ENCODE measurements at regions of chr10 and their contacts with region 1.

Region 1: DNA sequence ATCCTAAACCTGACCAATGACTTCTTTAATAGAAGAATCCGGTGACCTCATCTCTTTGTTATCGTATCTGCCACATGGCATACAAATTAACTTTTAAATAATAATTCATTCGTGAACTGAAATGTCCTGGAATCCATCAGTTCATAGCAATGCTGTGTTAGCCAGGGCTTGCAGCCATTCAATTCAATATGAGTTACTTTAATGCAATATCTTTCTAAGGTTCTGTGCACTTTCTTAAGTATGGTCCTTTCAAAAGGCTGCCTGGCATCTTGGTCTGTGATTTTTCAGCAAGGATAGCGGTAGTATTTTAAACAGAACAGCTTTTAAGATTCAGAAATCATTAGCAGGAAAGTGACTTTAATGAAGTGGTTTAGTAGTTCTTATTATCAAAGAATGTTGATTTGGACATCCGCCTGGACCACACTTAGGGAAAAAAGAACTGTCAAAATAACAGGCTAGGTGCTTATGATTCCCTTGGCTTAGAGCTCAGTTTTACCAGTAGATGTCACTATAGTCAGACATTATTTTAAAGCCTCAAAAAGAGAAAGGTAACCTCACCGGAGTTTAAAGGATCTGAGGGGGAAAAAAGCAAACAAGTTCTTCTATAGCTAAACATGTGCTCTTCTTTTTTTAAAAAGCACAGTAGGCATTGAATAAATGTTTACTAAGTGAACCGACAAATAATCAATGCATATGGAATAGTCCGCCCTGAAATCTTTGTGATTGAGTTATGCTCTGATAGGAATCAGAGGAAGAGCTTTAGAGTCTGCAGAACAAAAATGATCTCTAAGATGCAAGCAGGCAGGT is 22.7 kb downstream of the SLC35G1 start:
- DNase-seq: no peak
- H3K4me3 ChIP-seq: peak overlapping the region in 1 of 4 experiments; percentile 3; a peak in 2 of 8 replicates
- H3K27ac ChIP-seq: no peak overlapping the region
- H3K4me1 ChIP-seq: peaks cover 0 to 2% (median 0%) of the 10 kb centered on the region in 4 experiments; a peak in 1 of 7 replicates
- H3K27me3 ChIP-seq: no peaks in the 10 kb centered on the region
- CTCF ChIP-seq: peak in 2 of 3 experiments; percentile 34 to 58; a peak in 2 of 4 replicates
- EP300 ChIP-seq: no peak
- POLR2A ChIP-seq: no peak
- RAD21 ChIP-seq: peak; percentile 56 to 62

Region 2: GRCh38 chr10:93867525-93867924 is 48.9 kb before region 1 on chr10:
- CTCF ChIA-PET with region 1: interaction called, 12 read pairs
- POLR2A ChIA-PET with region 1: no interaction called
- DNase-seq: no peak
- H3K4me3 ChIP-seq: no peak overlapping the region
- H3K27ac ChIP-seq: no peak overlapping the region
- H3K4me1 ChIP-seq: no peaks in the 10 kb centered on the region
- H3K27me3 ChIP-seq: no peaks in the 10 kb centered on the region; a peak in 1 of 7 replicates
- CTCF ChIP-seq: no peak
- EP300 ChIP-seq: no peak
- POLR2A ChIP-seq: no peak
- RAD21 ChIP-seq: no peak

Region 3: DNA sequence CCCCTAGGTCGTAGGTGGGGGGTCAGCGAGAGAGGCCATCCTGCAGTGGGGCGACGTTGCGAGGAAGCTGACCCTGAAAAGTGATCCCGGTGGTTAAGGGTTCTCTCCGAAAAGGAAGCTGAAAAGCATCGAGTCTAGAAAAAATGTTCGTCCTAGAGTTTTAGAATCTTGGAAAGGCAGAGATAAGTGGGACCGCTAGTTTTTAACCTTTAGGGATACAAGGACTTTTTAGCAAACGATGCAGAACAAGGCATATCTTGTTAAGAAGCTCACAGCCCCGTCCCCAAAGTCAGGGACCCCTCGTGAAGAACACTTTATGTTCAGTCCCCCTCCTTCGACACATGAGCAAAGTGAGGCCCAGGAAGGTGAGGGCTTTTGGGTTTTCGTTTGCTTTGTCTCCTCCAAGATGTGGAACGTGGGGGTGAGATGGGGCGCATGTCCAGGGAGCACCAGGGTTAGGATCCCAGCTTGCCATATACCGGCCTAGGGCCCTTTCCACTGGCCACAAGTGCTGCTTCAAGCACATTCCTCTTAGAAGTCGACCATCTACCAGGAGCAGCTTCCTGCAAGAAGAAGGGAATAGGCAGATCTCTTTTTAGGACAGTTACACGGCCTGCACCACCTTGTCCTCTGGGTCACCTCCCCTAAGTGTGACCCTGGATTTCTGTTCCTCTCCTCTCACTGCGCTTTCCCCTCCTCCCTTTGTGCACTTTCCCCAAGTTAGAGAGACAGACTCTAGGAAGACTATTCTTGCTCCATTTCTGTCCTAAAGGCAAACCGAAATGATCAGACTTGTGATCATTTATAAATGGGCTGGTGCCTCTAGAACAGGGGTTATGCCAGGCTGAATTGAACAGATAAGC is 21.7 kb before region 1 on chr10:
- CTCF ChIA-PET with region 1: interaction called, 16 read pairs
- POLR2A ChIA-PET with region 1: interaction called, 3 read pairs
- DNase-seq: no peak
- H3K4me3 ChIP-seq: peak overlapping the region; percentile 64 to 75 (median 69)
- H3K27ac ChIP-seq: no peak overlapping the region
- H3K4me1 ChIP-seq: peaks cover 4 to 19% (median 10%) of the 10 kb centered on the region in 4 experiments; a peak in 6 of 7 replicates
- H3K27me3 ChIP-seq: peaks cover 0 to 15% (median 12%) of the 10 kb centered on the region in 4 experiments; a peak in 6 of 7 replicates
- CTCF ChIP-seq: no peak
- EP300 ChIP-seq: no peak
- POLR2A ChIP-seq: no peak
- RAD21 ChIP-seq: no peak

Region 4: DNA sequence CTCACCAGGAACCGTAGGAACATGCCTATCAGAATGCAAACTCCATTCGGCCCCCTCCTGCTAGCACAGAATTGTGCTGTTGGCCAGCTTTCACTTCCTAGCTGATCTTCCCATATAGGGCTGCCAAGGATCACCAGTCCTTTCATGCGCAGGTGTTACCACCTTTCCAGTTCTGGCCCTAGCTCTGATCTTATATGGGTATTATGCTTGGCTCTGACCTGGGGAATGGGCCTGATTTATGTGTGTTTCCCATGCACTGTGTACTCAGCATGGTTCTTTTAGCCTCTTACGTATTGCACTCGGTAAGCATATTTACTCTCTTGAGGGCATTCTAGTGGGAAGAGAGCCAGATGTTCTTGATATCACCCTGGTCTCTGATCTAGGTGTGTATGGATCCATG is 11.6 kb before region 1 on chr10:
- CTCF ChIA-PET with region 1: interaction called, 34 read pairs
- POLR2A ChIA-PET with region 1: no interaction called
- DNase-seq: no peak
- H3K4me3 ChIP-seq: no peak overlapping the region
- H3K27ac ChIP-seq: no peak overlapping the region
- H3K4me1 ChIP-seq: no peaks in the 10 kb centered on the region; a peak in 2 of 7 replicates
- H3K27me3 ChIP-seq: no peaks in the 10 kb centered on the region
- CTCF ChIP-seq: no peak
- EP300 ChIP-seq: no peak
- POLR2A ChIP-seq: no peak
- RAD21 ChIP-seq: no peak

Region 5: GRCh38 chr10:93941606-93942005 is 25.1 kb after region 1 on chr10:
- CTCF ChIA-PET with region 1: interaction called, 10 read pairs
- POLR2A ChIA-PET with region 1: no interaction called
- DNase-seq: no peak
- H3K4me3 ChIP-seq: no peak overlapping the region
- H3K27ac ChIP-seq: no peak overlapping the region
- H3K4me1 ChIP-seq: no peaks in the 10 kb centered on the region
- H3K27me3 ChIP-seq: no peaks in the 10 kb centered on the region
- CTCF ChIP-seq: no peak
- EP300 ChIP-seq: no peak
- POLR2A ChIP-seq: no peak
- RAD21 ChIP-seq: no peak

Region 6: DNA sequence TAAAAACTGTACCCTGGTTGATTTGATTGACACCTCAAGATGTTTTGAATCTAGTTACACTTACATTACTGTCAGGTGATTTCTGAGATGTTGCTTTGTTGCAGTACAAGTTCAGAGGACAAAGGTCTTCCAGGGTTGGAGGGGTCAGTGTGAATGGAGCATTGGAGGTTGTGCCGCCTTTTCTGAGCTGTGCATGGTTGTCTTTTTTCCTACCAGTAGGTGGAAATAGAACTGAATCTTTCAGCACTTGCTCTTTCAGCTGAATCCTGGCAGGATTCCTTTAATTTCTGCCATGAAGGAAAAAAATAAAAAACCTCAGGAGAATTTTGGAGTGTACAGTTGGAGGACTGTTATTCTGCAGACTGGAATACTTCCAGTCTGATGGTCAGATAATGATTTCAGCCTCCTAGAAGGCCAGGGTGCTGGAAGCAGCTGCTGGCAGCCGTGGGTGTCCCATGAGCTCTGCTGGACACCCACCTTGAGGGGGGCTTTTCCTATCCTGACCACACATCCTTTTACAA is 159.9 kb after region 1 on chr10:
- CTCF ChIA-PET with region 1: no interaction called
- POLR2A ChIA-PET with region 1: no interaction called
- DNase-seq: no peak
- H3K4me3 ChIP-seq: no peak overlapping the region
- H3K27ac ChIP-seq: no peak overlapping the region
- H3K4me1 ChIP-seq: no peaks in the 10 kb centered on the region
- H3K27me3 ChIP-seq: no peaks in the 10 kb centered on the region
- CTCF ChIP-seq: peak in 1 of 3 experiments; percentile 36; a peak in 2 of 4 replicates
- EP300 ChIP-seq: no peak
- POLR2A ChIP-seq: no peak
- RAD21 ChIP-seq: peak; percentile 23 to 44; a peak in 3 of 4 replicates

Region 7: GRCh38 chr10:94103801-94104221 is 187.4 kb after region 1 on chr10:
- CTCF ChIA-PET with region 1: no interaction called
- POLR2A ChIA-PET with region 1: no interaction called
- DNase-seq: no peak
- H3K4me3 ChIP-seq: no peak overlapping the region
- H3K27ac ChIP-seq: no peak overlapping the region
- H3K4me1 ChIP-seq: no peaks in the 10 kb centered on the region
- H3K27me3 ChIP-seq: no peaks in the 10 kb centered on the region
- CTCF ChIP-seq: no peak
- EP300 ChIP-seq: no peak
- POLR2A ChIP-seq: no peak
- RAD21 ChIP-seq: no peak

Measured in H1 (cell line).